WTC11 (cell line): ENCODE measurements at regions of chr2 and their contacts with region 1.

Region 1: GRCh38 chr2:69375494-69376353 is 11.3 kb downstream of the GFPT1 start:
- DNase-seq: no peak
- ATAC-seq: peak; percentile 80
- H3K4me3 Mint-ChIP-seq: no peak overlapping the region
- H3K27ac Mint-ChIP-seq: peak overlapping the region; percentile 79; the same call in 1 of the 2 replicates
- H3K4me1 Mint-ChIP-seq: peaks cover 9% of the 10 kb centered on the region
- H3K27me3 Mint-ChIP-seq: no peaks in the 10 kb centered on the region
- CTCF ChIP-seq: peak; percentile 38

Region 2: DNA sequence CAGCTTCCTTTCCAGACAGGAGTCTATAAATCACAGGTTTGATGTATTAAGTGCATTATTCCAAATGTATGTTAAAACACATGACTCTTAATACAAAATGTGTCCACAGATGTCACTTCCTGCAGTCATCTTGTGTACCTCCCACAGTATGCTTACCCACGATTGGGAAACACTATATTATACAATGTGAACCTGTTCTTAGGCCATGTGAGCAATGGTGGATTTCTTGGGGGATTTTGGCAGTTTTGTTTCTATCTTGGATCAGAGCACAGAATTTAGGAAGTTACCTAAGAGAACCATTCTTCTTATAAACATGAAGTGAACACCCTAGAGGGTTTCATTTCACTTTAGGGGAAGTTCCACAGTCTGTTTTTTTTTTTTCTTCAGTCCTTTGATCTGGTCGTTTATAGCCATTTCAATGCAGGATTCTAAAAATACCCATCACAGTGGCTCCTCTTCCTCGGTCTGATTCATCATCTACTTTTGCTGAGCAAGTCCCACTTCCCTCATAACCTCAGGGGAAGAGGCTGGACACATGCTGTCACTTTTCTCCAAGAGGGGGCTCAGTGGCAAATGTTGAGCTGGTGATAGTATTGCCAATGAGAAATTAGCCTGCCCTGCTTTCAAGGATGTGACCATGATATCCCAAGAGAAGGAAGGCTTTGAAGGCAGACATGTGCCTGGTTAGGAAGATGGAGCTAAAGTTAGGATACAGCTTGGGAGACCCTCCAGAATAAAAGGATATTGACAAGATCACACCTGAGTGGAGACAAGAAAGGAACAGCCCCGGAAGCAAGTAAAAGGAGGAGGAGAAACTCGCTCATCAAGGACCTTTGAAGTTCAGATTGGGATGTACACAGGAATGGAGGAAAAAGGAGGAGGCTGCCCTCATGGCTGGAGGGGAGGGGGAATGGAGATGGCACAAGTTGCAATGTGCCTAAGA is 988.0 kb before region 1 on chr2:
- CTCF ChIA-PET with region 1: no interaction called
- POLR2A ChIA-PET with region 1: no interaction called
- DNase-seq: no peak
- ATAC-seq: no peak
- H3K4me3 Mint-ChIP-seq: no peak overlapping the region
- H3K27ac Mint-ChIP-seq: no peak overlapping the region
- H3K4me1 Mint-ChIP-seq: peaks cover 3% of the 10 kb centered on the region; the same call in 1 of the 2 replicates
- H3K27me3 Mint-ChIP-seq: peaks cover 16% of the 10 kb centered on the region
- CTCF ChIP-seq: no peak

Region 3: DNA sequence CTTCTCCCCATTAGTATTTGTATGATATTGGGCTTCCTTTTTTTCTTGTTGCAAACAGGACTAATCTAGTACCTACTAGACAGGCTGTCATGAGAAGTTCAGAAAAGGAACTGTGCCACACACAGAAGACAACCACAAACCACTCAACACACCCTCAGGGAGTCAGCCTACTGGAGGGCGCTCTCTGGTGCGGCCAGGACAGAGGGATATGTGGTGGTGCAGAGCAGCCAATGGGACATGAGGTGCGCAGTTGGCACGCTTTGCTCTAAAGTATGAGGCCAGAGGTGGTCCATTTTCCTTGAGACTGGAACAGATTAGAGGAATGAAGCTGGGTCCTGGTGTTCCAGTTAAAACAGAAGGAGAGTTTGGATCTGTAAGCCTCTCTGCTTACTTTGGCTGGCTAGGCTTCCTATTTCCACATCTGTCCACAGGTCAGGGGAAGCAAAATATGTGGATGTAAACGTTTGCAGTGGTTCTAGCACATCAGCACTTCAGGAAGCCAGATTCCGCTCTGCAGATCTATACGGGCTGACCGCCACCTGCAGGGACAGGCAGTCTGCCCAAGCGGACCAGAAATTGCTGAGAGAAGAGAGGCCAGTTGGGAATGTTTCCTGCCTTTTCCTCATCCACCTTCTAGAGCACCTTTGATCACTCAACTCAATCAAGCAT is 102.8 kb before region 1 on chr2:
- CTCF ChIA-PET with region 1: no interaction called
- POLR2A ChIA-PET with region 1: no interaction called
- DNase-seq: no peak
- ATAC-seq: no peak
- H3K4me3 Mint-ChIP-seq: no peak overlapping the region
- H3K27ac Mint-ChIP-seq: no peak overlapping the region
- H3K4me1 Mint-ChIP-seq: no peaks in the 10 kb centered on the region
- H3K27me3 Mint-ChIP-seq: peaks cover 6% of the 10 kb centered on the region
- CTCF ChIP-seq: no peak

Region 4: GRCh38 chr2:69340101-69340775 is 35.5 kb before region 1 on chr2:
- CTCF ChIA-PET with region 1: no interaction called
- POLR2A ChIA-PET with region 1: no interaction called
- DNase-seq: no peak
- ATAC-seq: no peak
- H3K4me3 Mint-ChIP-seq: no peak overlapping the region
- H3K27ac Mint-ChIP-seq: no peak overlapping the region
- H3K4me1 Mint-ChIP-seq: no peaks in the 10 kb centered on the region
- H3K27me3 Mint-ChIP-seq: no peaks in the 10 kb centered on the region
- CTCF ChIP-seq: no peak

Region 5: GRCh38 chr2:69386789-69387734 is 11.3 kb after region 1 on chr2 and contains the start of gene GFPT1:
- CTCF ChIA-PET with region 1: interaction called, 30 read pairs
- POLR2A ChIA-PET with region 1: no interaction called
- DNase-seq: peak; percentile 90
- ATAC-seq: peak; percentile 94
- H3K4me3 Mint-ChIP-seq: peak within 1 kb of the TSS; percentile 92
- H3K27ac Mint-ChIP-seq: peak within 1 kb of the TSS; percentile 98
- H3K4me1 Mint-ChIP-seq: peaks cover 40% of the 10 kb centered on the region
- H3K27me3 Mint-ChIP-seq: peaks cover 9% of the 10 kb centered on the region
- CTCF ChIP-seq: no peak
- total RNA-seq, gene GFPT1: 65.5 to 75.5 TPM (median 74.6 TPM) in 3 replicates

Region 6: DNA sequence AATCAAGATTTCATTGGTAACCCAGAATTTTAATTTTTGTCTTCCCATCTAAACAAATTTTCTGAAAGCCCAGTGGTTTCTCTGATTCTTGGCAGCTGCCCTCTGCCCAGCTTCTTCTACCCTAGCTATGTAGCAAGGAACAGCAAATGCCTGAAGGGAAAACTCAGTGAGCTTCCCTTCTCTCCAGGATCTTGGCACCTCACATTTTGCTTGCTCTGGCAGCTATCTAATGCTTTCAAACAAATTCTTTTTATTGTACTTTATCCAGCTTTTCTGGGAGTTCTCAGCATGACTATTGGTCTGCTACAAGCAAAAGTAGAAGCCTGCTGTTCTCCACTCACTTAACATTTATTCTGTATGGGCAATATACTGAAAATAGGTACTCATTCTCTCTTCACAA is 29.6 kb after region 1 on chr2:
- CTCF ChIA-PET with region 1: no interaction called
- POLR2A ChIA-PET with region 1: no interaction called
- DNase-seq: no peak
- ATAC-seq: no peak
- H3K4me3 Mint-ChIP-seq: no peak overlapping the region
- H3K27ac Mint-ChIP-seq: no peak overlapping the region
- H3K4me1 Mint-ChIP-seq: no peaks in the 10 kb centered on the region
- H3K27me3 Mint-ChIP-seq: no peaks in the 10 kb centered on the region
- CTCF ChIP-seq: no peak